ENCODE measurements at regions of chr12 and their contacts with region 1.

Region 1: DNA sequence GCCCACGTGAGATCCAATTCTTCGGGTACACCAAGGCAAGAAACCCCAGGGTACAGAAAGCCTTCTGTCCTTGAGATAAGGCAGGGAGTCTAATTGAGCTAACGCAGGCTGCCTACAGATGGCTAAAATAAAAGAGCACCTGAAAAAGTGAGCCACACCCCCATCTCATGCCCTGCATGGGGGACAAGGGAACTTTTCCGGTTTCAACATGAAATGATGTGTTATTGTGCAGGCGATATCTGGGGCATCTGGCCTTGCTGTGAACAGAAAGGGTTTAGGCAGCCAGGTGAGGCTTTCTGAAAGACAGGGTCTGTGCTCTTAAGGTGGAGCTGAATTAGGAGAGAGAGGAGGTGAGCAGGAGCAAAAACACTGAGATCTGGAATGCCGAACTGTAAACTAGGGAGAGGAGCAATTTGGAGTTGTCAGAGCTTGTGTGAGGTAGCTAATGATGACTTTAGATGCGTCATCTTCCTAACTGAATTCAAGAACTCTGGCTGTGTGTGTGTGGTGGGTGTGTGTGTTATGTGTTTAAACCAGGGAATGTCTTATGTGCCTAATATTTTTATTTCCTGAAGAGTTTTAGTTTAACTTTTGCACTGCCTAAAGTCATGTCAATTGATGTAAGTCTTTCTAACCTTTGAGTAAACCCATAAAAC is 20.1 kb upstream of the LDHB start:
- DNase-seq: no peak
- H3K4me3 ChIP-seq: no peak overlapping the region
- H3K27ac ChIP-seq: no peak overlapping the region
- H3K4me1 ChIP-seq: peaks cover 0 to 6% (median 0%) of the 10 kb centered on the region in 4 donors
- H3K27me3 ChIP-seq: no peaks in the 10 kb centered on the region
- CTCF ChIP-seq: no peak
- EP300 ChIP-seq: no peak
- POLR2A ChIP-seq: no peak

Region 2: DNA sequence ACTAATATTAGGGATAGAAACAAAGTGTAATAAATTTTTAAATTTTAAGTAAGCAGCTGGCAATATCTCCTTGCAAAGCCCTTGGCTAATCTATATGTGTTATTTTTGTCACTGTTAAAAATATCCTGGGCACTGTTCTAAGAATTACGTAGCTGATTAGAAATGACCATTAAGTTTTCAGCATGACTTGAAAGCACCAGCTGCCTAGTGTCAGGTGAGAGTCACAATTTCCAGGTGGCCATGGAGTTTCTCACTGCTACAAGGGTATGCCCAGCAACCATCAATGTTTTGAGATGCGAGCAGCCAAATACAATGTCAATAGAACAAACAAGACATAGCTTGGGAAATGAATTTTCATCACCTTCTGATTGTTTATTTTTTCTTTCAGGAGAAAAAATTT is 49.8 kb before region 1 on chr12:
- in situ Hi-C with region 1: loop called in 1 of 4 experiments (anchors 10 kb)
- intact Hi-C with region 1: no loop called
- DNase-seq: no peak
- H3K4me3 ChIP-seq: no peak overlapping the region
- H3K27ac ChIP-seq: no peak overlapping the region
- H3K4me1 ChIP-seq: no peaks in the 10 kb centered on the region
- H3K27me3 ChIP-seq: no peaks in the 10 kb centered on the region
- CTCF ChIP-seq: no peak
- EP300 ChIP-seq: no peak
- POLR2A ChIP-seq: no peak